PC-3 (cell line): ENCODE measurements at regions of chr4 and their contacts with region 1.

Region 1: GRCh38 chr4:26088433-26088928 is 174.5 kb downstream of the SMIM20 start:
- DNase-seq: peak; percentile 93
- ATAC-seq: peak; percentile 81
- H3K4me3 ChIP-seq: no peak overlapping the region
- H3K27ac ChIP-seq: peak overlapping the region; percentile 82
- H3K4me1 ChIP-seq: peaks cover 42% of the 10 kb centered on the region
- H3K27me3 ChIP-seq: no peaks in the 10 kb centered on the region
- CTCF ChIP-seq: no peak

Region 2: DNA sequence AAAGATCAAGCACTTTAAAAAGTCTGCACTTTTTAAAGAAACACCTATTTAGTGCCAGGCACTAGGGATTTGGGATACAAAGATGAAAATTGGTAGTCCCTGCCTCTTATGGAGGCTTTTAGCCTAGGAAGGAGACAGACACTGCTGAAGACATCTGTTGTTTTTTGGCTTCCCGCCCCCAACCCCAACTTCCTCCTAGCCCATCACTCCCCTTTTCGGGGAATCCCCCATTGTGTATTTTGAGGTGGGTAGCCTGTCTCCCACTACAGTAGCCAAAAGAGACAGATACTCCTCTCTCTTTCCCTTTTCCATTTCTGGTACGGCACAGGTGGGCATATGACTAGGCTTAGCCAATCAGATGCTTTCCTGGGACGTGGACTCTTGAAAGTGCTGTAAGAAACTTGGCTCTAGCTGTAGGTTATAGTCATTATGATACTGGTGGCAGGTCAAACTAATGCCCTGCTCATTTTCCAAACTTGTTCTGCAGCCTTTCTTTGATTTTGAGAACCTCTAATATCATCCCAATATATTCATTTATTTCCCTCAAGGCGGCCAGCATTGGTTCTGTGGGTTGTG is 37.8 kb after region 1 on chr4:
- CTCF ChIA-PET with region 1: interaction called, 9 read pairs
- POLR2A ChIA-PET with region 1: interaction called, 6 read pairs
- intact Hi-C with region 1: loop called (anchors 1 kb)
- DNase-seq: no peak
- ATAC-seq: no peak
- H3K4me3 ChIP-seq: no peak overlapping the region
- H3K27ac ChIP-seq: no peak overlapping the region
- H3K4me1 ChIP-seq: peaks cover 35% of the 10 kb centered on the region
- H3K27me3 ChIP-seq: no peaks in the 10 kb centered on the region
- CTCF ChIP-seq: no peak

Region 3: DNA sequence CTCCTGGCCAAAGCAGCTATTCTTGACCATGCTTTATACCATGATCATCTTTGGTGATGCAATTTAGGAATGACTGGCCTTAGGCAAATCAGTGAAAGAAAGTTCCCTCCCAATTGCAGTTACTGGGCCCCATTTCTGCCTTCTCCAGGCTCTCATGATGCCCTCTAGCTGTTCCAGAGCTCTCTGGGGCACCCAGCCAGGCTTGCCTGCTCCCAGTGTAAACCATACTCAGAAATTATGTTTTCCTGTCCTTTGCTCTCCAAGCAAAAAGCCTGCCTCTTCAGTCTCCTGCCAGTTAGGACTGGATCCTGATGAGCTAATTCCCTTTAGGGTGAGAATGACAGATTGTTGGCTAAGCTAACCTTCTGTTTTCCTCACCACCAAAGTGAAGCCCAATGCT is 147.0 kb after region 1 on chr4:
- CTCF ChIA-PET with region 1: no interaction called
- POLR2A ChIA-PET with region 1: no interaction called
- intact Hi-C with region 1: loop called (anchors 5 kb)
- DNase-seq: peak; percentile 72
- ATAC-seq: peak; percentile 29
- H3K4me3 ChIP-seq: no peak overlapping the region
- H3K27ac ChIP-seq: no peak overlapping the region
- H3K4me1 ChIP-seq: peaks cover 50% of the 10 kb centered on the region
- H3K27me3 ChIP-seq: no peaks in the 10 kb centered on the region
- CTCF ChIP-seq: 0 out of 2 replicates have a peak, but pooled peaks have one; percentile 22

Region 4: GRCh38 chr4:26473893-26474292 is 385.4 kb after region 1 on chr4:
- CTCF ChIA-PET with region 1: no interaction called
- POLR2A ChIA-PET with region 1: no interaction called
- intact Hi-C with region 1: no loop called
- DNase-seq: no peak
- ATAC-seq: no peak
- H3K4me3 ChIP-seq: no peak overlapping the region
- H3K27ac ChIP-seq: no peak overlapping the region
- H3K4me1 ChIP-seq: no peaks in the 10 kb centered on the region
- H3K27me3 ChIP-seq: no peaks in the 10 kb centered on the region
- CTCF ChIP-seq: no peak